ENCODE measurements at regions of chr7 and their contacts with region 1.

Region 1: GRCh38 chr7:30780941-30781340 is 9.7 kb downstream of the MINDY4 start:
- DNase-seq: peak; percentile 48
- H3K4me3 ChIP-seq: no peak overlapping the region
- H3K27ac ChIP-seq: peak overlapping the region in 1 of 2 experiments; percentile 12; a peak in 1 of 4 replicates
- H3K4me1 ChIP-seq: peaks cover 0 to 17% of the 10 kb centered on the region in 2 experiments; a peak in 1 of 4 replicates
- H3K27me3 ChIP-seq: no peaks in the 10 kb centered on the region
- CTCF ChIP-seq: no peak
- EP300 ChIP-seq: no peak; a peak in 1 of 4 replicates
- RAD21 ChIP-seq: no peak

Region 2: GRCh38 chr7:30791114-30791779 is 10.3 kb after region 1 on chr7:
- CTCF ChIA-PET with region 1: interaction called, 10 read pairs
- POLR2A ChIA-PET with region 1: no interaction called
- DNase-seq: no peak
- H3K4me3 ChIP-seq: no peak overlapping the region
- H3K27ac ChIP-seq: no peak overlapping the region
- H3K4me1 ChIP-seq: peaks cover 3 to 10% of the 10 kb centered on the region in 2 experiments; a peak in 1 of 4 replicates
- H3K27me3 ChIP-seq: no peaks in the 10 kb centered on the region
- CTCF ChIP-seq: no peak
- EP300 ChIP-seq: no peak
- RAD21 ChIP-seq: peak; percentile 2; the same call in 1 of the 2 replicates

Measured in SK-N-SH (cell line).